ENCODE measurements at regions of chr11 and their contacts with region 1.

Region 1: DNA sequence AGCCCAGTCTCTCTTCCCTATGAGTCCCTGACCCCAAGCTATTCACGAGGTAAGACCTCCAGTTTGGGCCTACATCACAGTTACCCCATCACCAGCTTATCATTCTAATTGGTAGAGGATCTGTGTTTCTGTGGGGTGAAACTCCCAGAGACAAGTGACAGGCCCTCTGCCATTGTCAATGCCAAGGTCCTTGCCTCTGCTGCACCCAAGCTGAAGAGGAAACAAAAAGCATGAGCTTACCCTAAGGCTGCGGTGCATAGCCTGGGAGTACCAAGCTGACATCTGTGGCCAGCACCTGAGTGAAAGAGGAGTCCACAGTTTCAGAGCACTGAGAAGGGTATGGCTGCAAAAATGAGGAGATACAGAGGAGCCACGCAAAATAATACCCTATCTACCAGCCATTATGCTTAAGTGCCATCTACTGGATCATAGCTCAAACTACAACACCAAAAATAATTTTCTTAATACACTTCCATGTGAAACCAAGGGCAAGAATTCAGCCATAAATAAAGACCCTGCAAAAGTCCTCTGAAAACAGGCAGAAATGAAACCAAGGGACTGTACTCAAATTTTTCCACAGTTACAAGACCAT is 62.3 kb upstream of the ANO5 start:
- DNase-seq: no peak
- CTCF ChIP-seq: peak; percentile 29

Region 2: DNA sequence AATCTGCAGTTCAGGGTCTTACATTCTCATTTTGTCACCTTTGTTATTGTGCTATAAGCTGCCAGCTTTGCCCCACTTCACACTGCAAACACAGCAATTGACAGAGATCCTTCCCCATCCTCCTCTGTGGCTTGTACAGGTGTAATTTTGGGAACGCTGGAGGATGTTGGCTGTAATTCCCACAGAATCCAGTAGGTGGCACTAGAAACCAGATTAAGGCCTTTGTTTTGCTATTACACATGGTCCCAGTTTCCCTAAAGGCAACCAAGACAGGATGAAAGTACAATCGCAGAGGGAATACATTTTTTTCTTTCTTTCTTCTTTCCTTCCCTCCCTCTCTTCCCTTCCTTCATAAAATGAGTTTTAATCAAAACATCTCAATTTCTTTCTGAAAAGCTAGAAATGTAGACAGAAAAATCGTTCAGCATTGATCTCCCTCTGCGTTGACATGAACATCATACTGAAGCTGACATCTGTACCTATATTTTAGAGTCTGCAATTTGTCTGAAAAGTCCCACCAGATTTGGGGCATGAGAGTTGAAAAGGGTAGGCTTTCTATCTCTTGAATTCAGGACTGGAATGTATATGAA is 1482.5 kb before region 1 on chr11:
- in situ Hi-C with region 1: loop called (anchors 25 kb)
- DNase-seq: peak; percentile 74
- CTCF ChIP-seq: peak; percentile 81

Region 3: GRCh38 chr11:21888814-21889213 is 241.7 kb before region 1 on chr11:
- in situ Hi-C with region 1: no loop called
- DNase-seq: no peak
- CTCF ChIP-seq: no peak

Measured in GM13977 (cell line).